GM12878 (cell line): ENCODE measurements at regions of chr16 and their contacts with region 1.

Region 1: GRCh38 chr16:68902008-68902968 is 59.0 kb downstream of the TANGO6 start:
- DNase-seq: no peak
- ATAC-seq: peak; percentile 68
- H3K4me3 ChIP-seq: no peak overlapping the region
- H3K27ac ChIP-seq: no peak overlapping the region
- H3K4me1 ChIP-seq: no peaks in the 10 kb centered on the region
- H3K27me3 ChIP-seq: no peaks in the 10 kb centered on the region
- CTCF ChIP-seq: peak; percentile 54 to 61 (median 54); a peak in 5 of 6 replicates
- EP300 ChIP-seq: no peak
- POLR2A ChIP-seq: no peak
- RAD21 ChIP-seq: peak; percentile 79

Region 2: GRCh38 chr16:68943961-68944360 is 41.7 kb after region 1 on chr16:
- CTCF ChIA-PET with region 1: no interaction called
- POLR2A ChIA-PET with region 1: no interaction called
- RAD21 ChIA-PET with region 1: no interaction called
- SMC1A ChIA-PET with region 1: no interaction called
- in situ Hi-C with region 1: no loop called
- intact Hi-C with region 1: no loop called
- DNase-seq: no peak
- ATAC-seq: no peak
- H3K4me3 ChIP-seq: no peak overlapping the region
- H3K27ac ChIP-seq: no peak overlapping the region
- H3K4me1 ChIP-seq: no peaks in the 10 kb centered on the region
- H3K27me3 ChIP-seq: no peaks in the 10 kb centered on the region
- CTCF ChIP-seq: no peak
- EP300 ChIP-seq: no peak
- POLR2A ChIP-seq: no peak
- RAD21 ChIP-seq: no peak

Region 3: GRCh38 chr16:69100071-69100691 is 197.9 kb after region 1 on chr16:
- CTCF ChIA-PET with region 1: no interaction called
- POLR2A ChIA-PET with region 1: no interaction called
- RAD21 ChIA-PET with region 1: no interaction called
- SMC1A ChIA-PET with region 1: interaction called, 3 read pairs
- in situ Hi-C with region 1: no loop called
- intact Hi-C with region 1: loop called (anchors 5 kb)
- DNase-seq: no peak
- ATAC-seq: no peak
- H3K4me3 ChIP-seq: no peak overlapping the region
- H3K27ac ChIP-seq: no peak overlapping the region
- H3K4me1 ChIP-seq: no peaks in the 10 kb centered on the region; the same call in 1 of the 2 replicates
- H3K27me3 ChIP-seq: no peaks in the 10 kb centered on the region; a peak in 1 of 4 replicates
- CTCF ChIP-seq: no peak
- EP300 ChIP-seq: no peak
- POLR2A ChIP-seq: no peak
- RAD21 ChIP-seq: no peak